WTC11 (cell line): ENCODE measurements at regions of chr2 and their contacts with region 1.

Region 1: DNA sequence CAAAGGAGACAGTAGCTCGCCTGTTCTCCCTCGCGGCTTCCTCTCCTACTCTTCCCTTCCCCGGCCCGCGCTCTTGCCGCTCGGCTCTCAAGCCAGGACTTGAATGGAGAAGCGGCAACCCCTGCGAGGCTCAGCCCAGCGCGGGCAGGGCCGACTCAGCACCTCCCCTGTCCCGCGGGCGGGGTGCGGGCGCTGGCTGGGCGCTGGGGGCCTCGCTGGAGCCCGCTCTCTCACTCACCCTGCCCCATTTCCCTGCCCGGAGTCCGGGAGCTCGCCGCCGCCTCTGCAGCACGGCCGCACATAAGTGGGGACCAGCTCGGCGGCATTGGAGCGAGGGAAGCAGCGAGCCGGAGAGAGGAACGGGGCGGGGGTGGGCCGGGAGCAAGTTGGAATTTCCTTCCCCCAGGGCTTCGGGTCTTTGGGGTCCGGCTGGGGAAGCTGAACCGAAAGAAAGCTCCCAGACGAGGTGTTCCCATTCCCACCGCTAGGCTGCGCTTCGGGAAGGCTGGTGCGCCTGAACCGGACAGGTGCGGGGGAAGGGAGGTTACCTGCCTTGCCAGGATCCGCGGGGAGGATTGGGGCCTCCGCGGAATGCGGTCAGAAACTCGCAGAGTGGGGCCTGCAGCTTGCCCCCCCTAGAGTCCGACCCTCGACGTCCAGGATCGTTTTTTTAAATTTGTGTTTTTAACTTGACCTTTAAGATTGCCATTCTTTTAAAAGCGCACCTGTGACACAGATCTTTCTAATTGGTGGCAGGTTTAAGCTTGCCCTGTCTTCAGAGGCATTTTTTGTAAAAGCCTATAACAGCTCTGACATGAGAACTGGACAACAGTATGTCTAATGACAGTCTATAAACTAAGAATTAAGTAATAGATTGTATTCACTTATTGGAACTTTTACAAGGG is at the start of gene COBLL1:
- DNase-seq: peak; percentile 94
- ATAC-seq: peak; percentile 79
- H3K4me3 Mint-ChIP-seq: peak within 1 kb of the TSS; percentile 84
- H3K27ac Mint-ChIP-seq: no peak within 1 kb of the TSS
- H3K4me1 Mint-ChIP-seq: peaks cover 19% of the 10 kb centered on the region
- H3K27me3 Mint-ChIP-seq: peaks cover 13% of the 10 kb centered on the region
- CTCF ChIP-seq: peak; percentile 70
- total RNA-seq, gene COBLL1: 4.4 to 6.3 TPM (median 5.8 TPM) in 3 replicates

Region 2: DNA sequence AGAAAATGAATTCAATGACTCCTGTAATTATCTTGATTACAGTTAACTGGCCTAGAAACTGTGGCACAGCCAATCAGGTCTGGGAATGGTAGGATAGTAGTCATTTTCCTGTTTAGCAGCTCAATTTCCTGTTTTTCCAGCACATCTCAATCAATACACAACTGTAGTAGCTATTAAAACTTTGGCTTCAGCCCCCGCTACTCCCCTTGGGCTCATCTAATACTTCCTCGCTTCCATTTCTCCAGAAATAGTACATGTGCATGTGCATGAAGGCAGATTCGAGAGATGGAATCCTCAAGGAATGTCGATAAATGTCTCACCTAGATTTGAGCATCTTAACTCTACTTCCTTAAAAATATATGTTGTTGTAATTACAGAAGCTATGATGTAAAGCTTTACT is 10.1 kb before region 1 on chr2:
- CTCF ChIA-PET with region 1: interaction called, 11 read pairs
- POLR2A ChIA-PET with region 1: interaction called, 8 read pairs
- DNase-seq: no peak
- ATAC-seq: no peak
- H3K4me3 Mint-ChIP-seq: no peak overlapping the region
- H3K27ac Mint-ChIP-seq: no peak overlapping the region
- H3K4me1 Mint-ChIP-seq: peaks cover 5% of the 10 kb centered on the region; the same call in 1 of the 2 replicates
- H3K27me3 Mint-ChIP-seq: no peaks in the 10 kb centered on the region
- CTCF ChIP-seq: no peak

Region 3: GRCh38 chr2:165015052-165015642 is 173.2 kb after region 1 on chr2:
- CTCF ChIA-PET with region 1: no interaction called
- POLR2A ChIA-PET with region 1: no interaction called
- DNase-seq: peak; percentile 75
- ATAC-seq: peak; percentile 51
- H3K4me3 Mint-ChIP-seq: no peak overlapping the region
- H3K27ac Mint-ChIP-seq: no peak overlapping the region
- H3K4me1 Mint-ChIP-seq: peaks cover 8% of the 10 kb centered on the region
- H3K27me3 Mint-ChIP-seq: no peaks in the 10 kb centered on the region
- CTCF ChIP-seq: peak; percentile 76